Ovary (tissue), 10 donors: ENCODE measurements at regions of chr19 and their contacts with region 1.

Region 1: DNA sequence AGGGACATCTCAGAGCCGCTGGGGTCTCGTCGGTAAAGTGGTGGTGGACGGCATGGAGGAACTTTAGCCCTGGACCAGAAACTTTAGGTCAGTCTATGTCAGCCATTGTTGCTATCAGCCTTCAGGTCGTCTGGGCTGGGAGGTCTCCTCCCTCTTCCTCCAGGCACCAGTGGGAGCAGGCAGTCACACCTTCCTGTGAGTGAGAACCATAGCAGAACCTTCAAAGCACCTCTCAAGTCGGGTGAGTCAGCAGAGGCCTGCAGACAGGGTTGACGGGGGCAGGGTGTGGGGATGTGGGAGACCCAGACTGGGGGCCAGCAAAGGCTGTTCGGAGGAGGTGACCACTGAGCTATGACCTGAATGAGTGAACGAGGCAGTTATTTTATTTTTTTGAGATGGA is 15.4 kb upstream of the SBNO2 start:
- DNase-seq: no peak
- H3K4me3 ChIP-seq: no peak overlapping the region
- H3K27ac ChIP-seq: no peak overlapping the region
- H3K4me1 ChIP-seq: no peaks in the 10 kb centered on the region
- H3K27me3 ChIP-seq: no peaks in the 10 kb centered on the region
- CTCF ChIP-seq: no peak
- EP300 ChIP-seq: no peak
- POLR2A ChIP-seq: no peak

Region 2: GRCh38 chr19:1113033-1113985 is 76.1 kb before region 1 on chr19:
- intact Hi-C with region 1: loop called (anchors 5 kb)
- DNase-seq: peak; percentile 97 to 98 (median 98)
- H3K4me3 ChIP-seq: no peak overlapping the region
- H3K27ac ChIP-seq: peak overlapping the region; percentile 77 to 90
- H3K4me1 ChIP-seq: peaks cover 15% of the 10 kb centered on the region
- H3K27me3 ChIP-seq: no peaks in the 10 kb centered on the region
- CTCF ChIP-seq: peak; percentile 94 to 95 (median 95)
- EP300 ChIP-seq: no peak
- POLR2A ChIP-seq: no peak

Region 3: DNA sequence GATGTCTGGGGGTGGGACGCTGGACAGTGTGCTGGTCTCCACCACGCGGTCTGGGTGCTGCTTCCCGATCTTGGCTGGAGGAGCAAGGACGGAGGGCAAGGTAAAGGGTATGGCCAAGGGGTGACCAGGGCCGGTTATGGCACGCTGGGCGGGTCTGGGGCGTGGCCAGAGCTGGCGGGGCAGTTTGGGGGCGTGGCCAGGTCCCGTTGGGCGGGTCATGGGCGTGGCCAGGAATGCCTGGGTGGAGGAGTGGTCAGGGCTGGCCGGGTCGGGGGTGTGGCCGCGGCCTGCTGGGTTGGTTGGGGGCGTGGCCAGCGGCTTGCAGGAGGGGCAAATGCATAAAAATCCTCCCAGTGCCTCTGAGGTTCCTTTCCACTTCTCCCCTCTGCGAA is 66.5 kb before region 1 on chr19:
- intact Hi-C with region 1: loop called in 1 of 4 experiments (anchors 5 kb)
- DNase-seq: peak in 4 of 5 donors; percentile 52 to 73 (median 67)
- H3K4me3 ChIP-seq: no peak overlapping the region
- H3K27ac ChIP-seq: no peak overlapping the region
- H3K4me1 ChIP-seq: no peaks in the 10 kb centered on the region
- H3K27me3 ChIP-seq: no peaks in the 10 kb centered on the region
- CTCF ChIP-seq: no peak
- EP300 ChIP-seq: no peak
- POLR2A ChIP-seq: no peak

Region 4: DNA sequence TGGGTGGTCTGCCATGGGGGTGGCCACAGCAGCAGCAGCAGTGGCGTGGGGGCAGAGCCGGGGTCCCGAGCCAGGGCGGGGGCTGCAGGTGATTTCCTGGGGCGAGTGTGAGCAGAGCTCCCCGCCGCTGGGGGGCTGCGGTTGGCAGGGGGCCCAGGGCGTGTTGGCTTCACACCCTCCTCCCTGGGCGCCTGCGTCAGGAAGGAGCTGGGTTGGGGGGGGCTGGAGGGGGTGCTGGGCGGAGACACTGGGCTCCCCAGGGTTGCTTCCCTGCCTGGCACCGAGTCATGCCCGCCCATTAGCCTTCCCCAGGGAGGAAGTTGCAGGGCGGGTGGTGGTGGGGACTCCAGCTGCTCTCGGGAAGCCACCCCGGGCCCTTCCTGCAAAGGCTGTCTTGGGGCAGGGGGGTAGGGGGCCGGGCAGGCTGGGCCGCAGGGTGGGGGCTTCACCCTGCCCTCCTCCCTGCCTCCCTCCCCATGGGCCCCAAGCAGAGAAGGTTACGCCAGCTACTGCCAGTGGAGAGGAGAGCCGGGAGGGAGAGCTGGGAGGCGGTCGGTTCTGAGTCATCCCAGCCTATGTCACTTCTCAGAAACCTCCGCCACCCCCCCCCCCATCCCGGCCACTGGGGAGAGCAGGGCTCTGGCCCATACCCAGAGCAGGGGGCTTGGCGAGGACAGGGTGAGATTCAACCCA is 63.5 kb after region 1 on chr19:
- intact Hi-C with region 1: no loop called
- DNase-seq: peak; percentile 90 to 95 (median 91)
- H3K4me3 ChIP-seq: peak overlapping the region; percentile 65
- H3K27ac ChIP-seq: peak overlapping the region; percentile 87 to 89
- H3K4me1 ChIP-seq: peaks cover 23% of the 10 kb centered on the region
- H3K27me3 ChIP-seq: no peaks in the 10 kb centered on the region
- CTCF ChIP-seq: peak in 1 of 3 donors; percentile 31
- EP300 ChIP-seq: peak; percentile 12
- POLR2A ChIP-seq: no peak

Region 5: DNA sequence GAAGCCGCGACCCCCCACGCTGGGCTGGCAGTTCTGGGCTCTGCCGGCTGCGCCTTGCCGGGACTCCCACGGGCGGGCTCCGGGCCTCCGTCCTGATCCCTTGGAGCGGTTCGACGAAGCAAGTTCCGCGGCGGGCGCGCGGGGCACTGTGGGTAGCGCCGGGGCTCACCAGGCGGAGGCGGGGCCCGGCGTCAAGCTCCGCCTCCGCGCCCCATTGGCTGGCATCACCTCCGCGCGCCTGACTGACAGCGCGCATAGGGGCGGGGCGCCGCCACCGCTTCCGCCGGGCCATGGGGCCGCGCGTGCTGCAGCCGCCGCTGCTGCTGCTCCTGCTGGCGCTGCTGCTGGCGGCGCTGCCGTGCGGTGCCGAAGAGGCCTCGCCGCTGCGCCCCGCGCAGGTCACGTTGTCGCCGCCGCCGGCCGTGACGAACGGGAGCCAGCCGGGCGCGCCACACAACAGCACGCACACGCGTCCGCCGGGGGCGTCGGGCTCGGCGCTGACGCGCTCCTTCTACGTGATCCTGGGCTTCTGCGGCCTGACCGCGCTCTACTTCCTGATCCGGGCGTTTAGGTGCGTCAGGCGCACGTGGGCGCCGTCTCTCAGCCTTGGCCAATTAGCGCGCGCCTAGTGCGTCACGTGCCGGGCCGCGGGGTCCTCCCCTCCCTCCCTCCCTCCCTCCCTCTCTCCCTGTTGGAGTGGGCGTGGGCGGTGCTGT is 86.0 kb after region 1 on chr19 and contains the start of gene FAM174C:
- intact Hi-C with region 1: no loop called
- DNase-seq: peak; percentile 93 to 97 (median 95)
- H3K4me3 ChIP-seq: peak within 1 kb of the TSS; percentile 55
- H3K27ac ChIP-seq: peak within 1 kb of the TSS; percentile 97 to 99
- H3K4me1 ChIP-seq: peaks cover 28% of the 10 kb centered on the region
- H3K27me3 ChIP-seq: no peaks in the 10 kb centered on the region
- CTCF ChIP-seq: no peak
- EP300 ChIP-seq: no peak
- POLR2A ChIP-seq: peak; percentile 59
- total RNA-seq, gene FAM174C: 21.7 to 72.5 (median 26.7) TPM

Region 6: DNA sequence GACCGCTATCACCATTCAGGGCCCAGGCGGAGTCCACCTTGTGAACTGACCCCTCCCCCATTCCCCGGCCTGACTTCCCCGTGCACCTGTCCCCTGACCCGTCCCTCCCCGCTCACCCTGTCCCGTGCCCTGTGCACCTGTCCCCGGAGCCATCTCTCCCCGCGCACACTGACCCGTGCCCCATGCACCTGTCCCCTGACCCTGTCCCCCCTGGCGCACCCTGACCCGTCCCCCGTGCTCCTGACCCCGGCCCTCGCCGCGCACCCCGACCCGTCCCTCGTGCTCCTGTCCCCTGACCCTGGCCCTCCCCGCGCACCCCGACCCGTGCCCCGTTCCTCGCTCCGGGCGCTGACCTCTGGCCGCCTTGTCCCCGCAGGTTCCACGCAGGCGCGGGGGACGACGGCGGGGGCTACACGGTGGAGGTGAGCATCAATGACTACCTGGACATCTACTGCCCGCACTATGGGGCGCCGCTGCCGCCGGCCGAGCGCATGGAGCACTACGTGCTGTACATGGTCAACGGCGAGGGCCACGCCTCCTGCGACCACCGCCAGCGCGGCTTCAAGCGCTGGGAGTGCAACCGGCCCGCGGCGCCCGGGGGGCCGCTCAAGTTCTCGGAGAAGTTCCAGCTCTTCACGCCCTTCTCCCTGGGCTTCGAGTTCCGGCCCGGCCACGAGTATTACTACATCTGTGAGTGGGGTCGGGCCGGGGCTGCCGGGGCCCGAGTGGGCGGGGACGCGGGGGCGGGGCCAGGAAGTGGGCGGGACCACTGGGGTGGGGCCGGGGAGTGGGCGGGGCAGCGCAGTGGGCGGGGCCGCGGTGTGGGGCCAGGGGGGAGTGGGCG is 106.0 kb after region 1 on chr19:
- intact Hi-C with region 1: no loop called
- DNase-seq: no peak
- H3K4me3 ChIP-seq: no peak overlapping the region
- H3K27ac ChIP-seq: no peak overlapping the region
- H3K4me1 ChIP-seq: no peaks in the 10 kb centered on the region
- H3K27me3 ChIP-seq: peaks cover 7% of the 10 kb centered on the region
- CTCF ChIP-seq: no peak
- EP300 ChIP-seq: no peak
- POLR2A ChIP-seq: no peak